WTC11 (cell line): ENCODE measurements at regions of chr1 and their contacts with region 1.

Region 1: DNA sequence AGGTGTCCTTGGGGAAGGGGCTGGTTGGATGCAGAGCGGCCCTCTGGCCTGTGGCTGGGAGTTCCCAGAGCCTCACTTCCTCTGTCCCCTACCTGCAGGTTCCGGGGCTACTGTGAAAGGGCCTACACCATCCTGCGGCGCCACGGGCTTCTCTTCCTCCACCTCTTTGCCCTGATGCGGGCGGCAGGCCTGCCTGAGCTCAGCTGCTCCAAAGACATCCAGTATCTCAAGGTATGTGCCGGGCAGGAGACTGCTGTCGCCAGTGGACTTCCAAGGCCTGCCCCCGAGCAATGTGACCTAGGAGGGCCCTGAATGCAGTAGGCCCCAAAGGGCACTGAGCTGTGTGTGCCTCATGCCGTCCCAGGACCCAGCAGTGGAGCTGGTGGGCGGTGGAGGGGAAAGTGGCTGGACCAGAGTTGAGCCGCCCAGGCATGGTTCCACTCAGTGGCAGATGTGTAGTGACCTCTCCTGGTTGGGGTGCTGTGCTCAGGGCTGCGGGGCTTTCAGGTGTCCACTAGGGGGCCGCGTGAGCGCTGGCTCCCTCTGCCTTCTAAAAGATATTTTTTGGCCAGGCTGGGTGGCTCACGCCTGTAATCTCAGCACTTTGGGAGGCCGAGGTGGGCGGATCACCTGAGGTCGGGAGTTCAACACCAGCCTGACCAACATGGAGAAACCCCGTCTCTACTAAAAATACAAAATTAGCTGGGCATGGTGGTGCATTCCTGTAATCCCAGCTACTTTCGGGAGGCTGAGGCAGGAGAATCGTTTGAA is 73.4 kb downstream of the PIK3CD start:
- DNase-seq: peak; percentile 80
- ATAC-seq: peak; percentile 78
- H3K4me3 Mint-ChIP-seq: no peak overlapping the region
- H3K27ac Mint-ChIP-seq: peak overlapping the region; percentile 32; the same call in 1 of the 2 replicates
- H3K4me1 Mint-ChIP-seq: peaks cover 8% of the 10 kb centered on the region
- H3K27me3 Mint-ChIP-seq: no peaks in the 10 kb centered on the region; the same call in 1 of the 2 replicates
- CTCF ChIP-seq: peak; percentile 92

Region 2: GRCh38 chr1:9629445-9630201 is 95.3 kb before region 1 on chr1:
- CTCF ChIA-PET with region 1: interaction called, 73 read pairs
- POLR2A ChIA-PET with region 1: no interaction called
- DNase-seq: no peak
- ATAC-seq: no peak
- H3K4me3 Mint-ChIP-seq: no peak overlapping the region
- H3K27ac Mint-ChIP-seq: no peak overlapping the region
- H3K4me1 Mint-ChIP-seq: peaks cover 5% of the 10 kb centered on the region
- H3K27me3 Mint-ChIP-seq: peaks cover 19% of the 10 kb centered on the region
- CTCF ChIP-seq: no peak

Region 3: GRCh38 chr1:9705337-9706093 is 19.4 kb before region 1 on chr1:
- CTCF ChIA-PET with region 1: interaction called, 39 read pairs
- POLR2A ChIA-PET with region 1: interaction called, 3 read pairs
- DNase-seq: no peak
- ATAC-seq: no peak
- H3K4me3 Mint-ChIP-seq: no peak overlapping the region
- H3K27ac Mint-ChIP-seq: no peak overlapping the region
- H3K4me1 Mint-ChIP-seq: peaks cover 6% of the 10 kb centered on the region
- H3K27me3 Mint-ChIP-seq: no peaks in the 10 kb centered on the region
- CTCF ChIP-seq: no peak

Region 4: DNA sequence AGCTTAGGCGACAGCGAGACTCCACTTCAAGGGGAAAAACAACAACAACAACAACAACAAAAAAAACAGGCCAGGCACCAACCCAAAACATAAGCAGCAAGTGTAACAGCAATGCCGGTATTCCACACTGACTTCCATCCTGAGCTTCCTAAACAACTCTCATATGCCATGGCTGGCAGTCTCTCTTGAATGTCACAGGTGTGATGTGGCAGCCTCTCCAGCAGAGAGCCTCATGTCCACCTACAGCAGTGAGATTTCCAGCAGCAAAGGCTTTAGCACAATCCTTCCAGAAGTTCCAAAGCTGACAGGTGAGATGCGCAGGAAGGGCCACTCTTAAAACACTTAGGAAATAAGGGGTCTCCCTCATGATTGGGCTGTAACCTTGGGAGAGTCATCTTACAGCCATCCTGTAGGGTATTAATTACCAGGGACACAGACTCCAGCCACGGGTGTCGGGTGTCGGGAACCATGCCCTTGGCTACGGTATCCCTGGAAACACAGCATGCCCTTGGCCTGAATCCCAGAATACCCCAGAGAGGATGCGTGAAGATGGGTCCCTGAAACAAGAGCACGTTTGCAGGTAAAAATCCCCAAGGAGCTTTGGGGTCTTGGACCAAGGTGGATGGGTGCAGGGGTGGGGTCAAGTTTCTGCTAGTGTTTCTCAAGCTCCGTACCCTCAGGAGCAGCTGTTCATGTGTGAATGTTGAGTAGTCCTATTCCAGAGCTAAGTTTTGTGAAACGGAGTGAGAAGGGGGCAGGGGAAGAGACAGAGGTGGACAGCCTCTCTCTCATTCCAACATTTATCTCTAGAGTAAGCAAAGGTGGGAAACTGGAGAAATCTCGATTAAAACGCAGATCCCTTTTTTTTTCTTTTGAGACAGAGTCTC is 67.5 kb after region 1 on chr1:
- CTCF ChIA-PET with region 1: interaction called, 16 read pairs
- POLR2A ChIA-PET with region 1: no interaction called
- DNase-seq: peak; percentile 62
- ATAC-seq: peak; percentile 95
- H3K4me3 Mint-ChIP-seq: 0 out of 2 replicates have a peak overlapping the region, but pooled peaks have one; percentile 9
- H3K27ac Mint-ChIP-seq: peak overlapping the region; percentile 96
- H3K4me1 Mint-ChIP-seq: peaks cover 58% of the 10 kb centered on the region
- H3K27me3 Mint-ChIP-seq: no peaks in the 10 kb centered on the region
- CTCF ChIP-seq: no peak

Region 5: DNA sequence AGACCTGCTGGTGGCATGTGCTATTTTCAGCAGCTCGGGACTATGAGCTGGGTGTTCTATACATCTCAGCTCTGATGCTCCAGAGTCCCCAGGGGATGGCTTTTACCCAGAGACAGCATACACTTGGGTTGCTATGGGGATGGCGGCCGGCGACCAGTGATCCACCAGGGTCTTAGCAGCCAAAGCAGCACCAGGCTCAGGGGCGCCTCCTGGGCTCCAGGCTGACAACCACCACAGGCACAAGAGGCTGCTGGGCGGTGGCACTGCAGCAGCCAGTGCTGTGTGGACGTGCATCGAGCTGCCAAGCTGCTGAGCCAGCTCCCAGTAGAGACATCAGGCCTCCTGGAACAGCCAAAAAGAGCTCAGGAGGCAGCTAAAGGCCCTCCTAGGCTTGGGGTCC is 136.5 kb after region 1 on chr1:
- CTCF ChIA-PET with region 1: interaction called, 44 read pairs
- POLR2A ChIA-PET with region 1: no interaction called
- DNase-seq: peak; percentile 55
- ATAC-seq: peak; percentile 62
- H3K4me3 Mint-ChIP-seq: no peak overlapping the region
- H3K27ac Mint-ChIP-seq: peak overlapping the region; percentile 57; the same call in 1 of the 2 replicates
- H3K4me1 Mint-ChIP-seq: peaks cover 19% of the 10 kb centered on the region
- H3K27me3 Mint-ChIP-seq: no peaks in the 10 kb centered on the region
- CTCF ChIP-seq: no peak

Region 6: DNA sequence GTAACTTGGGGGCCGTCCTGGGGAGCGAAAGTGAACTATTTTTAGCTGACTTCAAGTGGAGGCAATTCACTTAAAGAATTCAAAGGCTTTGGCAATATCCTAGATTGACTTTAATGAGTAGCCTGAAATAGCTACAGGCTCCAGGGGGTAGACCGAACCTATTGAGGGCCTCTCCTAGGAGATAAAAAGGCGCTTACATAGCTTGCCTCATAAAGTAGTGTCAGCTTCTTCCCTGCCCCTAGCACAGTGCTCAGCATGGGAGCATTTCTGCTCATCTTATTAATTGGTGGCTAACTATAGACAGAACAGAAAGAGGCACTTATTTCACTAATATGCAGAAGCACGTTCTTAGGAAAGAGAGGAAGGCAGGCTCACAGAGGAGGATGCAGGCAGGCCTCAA is 197.5 kb after region 1 on chr1:
- CTCF ChIA-PET with region 1: no interaction called
- POLR2A ChIA-PET with region 1: no interaction called
- DNase-seq: no peak
- ATAC-seq: peak; percentile 81
- H3K4me3 Mint-ChIP-seq: no peak overlapping the region
- H3K27ac Mint-ChIP-seq: peak overlapping the region; percentile 81
- H3K4me1 Mint-ChIP-seq: peaks cover 35% of the 10 kb centered on the region
- H3K27me3 Mint-ChIP-seq: no peaks in the 10 kb centered on the region
- CTCF ChIP-seq: no peak